AG04450 (cell line): ENCODE measurements at regions of chr10 and their contacts with region 1.

Region 1: DNA sequence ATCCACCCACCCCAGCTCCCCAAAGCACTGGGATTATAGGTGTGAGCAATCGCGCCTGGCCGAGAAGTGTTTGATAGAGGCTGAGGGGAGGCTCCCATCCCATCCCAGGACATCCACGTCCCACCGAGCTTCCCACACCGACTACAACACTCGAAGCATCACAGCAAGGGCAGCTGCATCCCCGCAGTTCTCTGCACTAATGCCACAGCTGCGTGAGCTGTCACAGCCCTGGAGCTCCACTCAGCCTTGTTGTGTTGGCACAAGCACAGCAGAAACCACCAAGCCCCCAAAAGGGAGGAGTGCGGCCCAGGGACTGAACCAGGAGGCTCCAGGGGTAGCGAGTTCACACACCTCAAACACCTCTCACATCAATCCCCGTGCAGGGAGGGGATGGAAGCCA is 121.6 kb downstream of the DIP2C start:
- DNase-seq: no peak
- H3K4me3 ChIP-seq: no peak overlapping the region
- H3K27ac ChIP-seq: no peak overlapping the region
- H3K27me3 ChIP-seq: no peaks in the 10 kb centered on the region
- CTCF ChIP-seq: no peak

Region 2: GRCh38 chr10:588241-589165 is 20.6 kb after region 1 on chr10:
- CTCF ChIA-PET with region 1: interaction called, 11 read pairs
- POLR2A ChIA-PET with region 1: no interaction called
- DNase-seq: no peak
- H3K4me3 ChIP-seq: no peak overlapping the region
- H3K27ac ChIP-seq: no peak overlapping the region
- H3K27me3 ChIP-seq: no peaks in the 10 kb centered on the region
- CTCF ChIP-seq: peak; percentile 48

Region 3: GRCh38 chr10:878333-878759 is 310.5 kb after region 1 on chr10:
- CTCF ChIA-PET with region 1: no interaction called
- POLR2A ChIA-PET with region 1: no interaction called
- DNase-seq: peak; percentile 3
- H3K4me3 ChIP-seq: no peak overlapping the region
- H3K27ac ChIP-seq: peak overlapping the region; percentile 40
- H3K27me3 ChIP-seq: no peaks in the 10 kb centered on the region
- CTCF ChIP-seq: no peak